A549 (cell line): ENCODE measurements at regions of chr5 and their contacts with region 1.

Region 1: GRCh38 chr5:73448463-73449136 is at the start of gene FOXD1:
- DNase-seq: peak; percentile 77 to 95
- ATAC-seq: peak; percentile 78 to 94
- H3K4me3 ChIP-seq: peak within 1 kb of the TSS; percentile 67
- H3K27ac ChIP-seq: peak within 1 kb of the TSS; percentile 89 to 94
- H3K4me1 ChIP-seq: peaks cover 19% of the 10 kb centered on the region
- CTCF ChIP-seq: no peak
- EP300 ChIP-seq: no peak
- POLR2A ChIP-seq: peak; percentile 82
- RAD21 ChIP-seq: no peak
- polyA plus RNA-seq, gene FOXD1: 1.8 and 2.2 TPM in 2 replicates

Region 2: GRCh38 chr5:73081093-73081492 is 367.5 kb before region 1 on chr5:
- CTCF ChIA-PET with region 1: interaction called, 20 read pairs
- POLR2A ChIA-PET with region 1: interaction called, 5 read pairs
- DNase-seq: no peak
- ATAC-seq: no peak
- H3K4me3 ChIP-seq: no peak overlapping the region
- H3K27ac ChIP-seq: no peak overlapping the region
- H3K4me1 ChIP-seq: no peaks in the 10 kb centered on the region
- CTCF ChIP-seq: no peak
- EP300 ChIP-seq: no peak
- POLR2A ChIP-seq: no peak
- RAD21 ChIP-seq: no peak

Region 3: DNA sequence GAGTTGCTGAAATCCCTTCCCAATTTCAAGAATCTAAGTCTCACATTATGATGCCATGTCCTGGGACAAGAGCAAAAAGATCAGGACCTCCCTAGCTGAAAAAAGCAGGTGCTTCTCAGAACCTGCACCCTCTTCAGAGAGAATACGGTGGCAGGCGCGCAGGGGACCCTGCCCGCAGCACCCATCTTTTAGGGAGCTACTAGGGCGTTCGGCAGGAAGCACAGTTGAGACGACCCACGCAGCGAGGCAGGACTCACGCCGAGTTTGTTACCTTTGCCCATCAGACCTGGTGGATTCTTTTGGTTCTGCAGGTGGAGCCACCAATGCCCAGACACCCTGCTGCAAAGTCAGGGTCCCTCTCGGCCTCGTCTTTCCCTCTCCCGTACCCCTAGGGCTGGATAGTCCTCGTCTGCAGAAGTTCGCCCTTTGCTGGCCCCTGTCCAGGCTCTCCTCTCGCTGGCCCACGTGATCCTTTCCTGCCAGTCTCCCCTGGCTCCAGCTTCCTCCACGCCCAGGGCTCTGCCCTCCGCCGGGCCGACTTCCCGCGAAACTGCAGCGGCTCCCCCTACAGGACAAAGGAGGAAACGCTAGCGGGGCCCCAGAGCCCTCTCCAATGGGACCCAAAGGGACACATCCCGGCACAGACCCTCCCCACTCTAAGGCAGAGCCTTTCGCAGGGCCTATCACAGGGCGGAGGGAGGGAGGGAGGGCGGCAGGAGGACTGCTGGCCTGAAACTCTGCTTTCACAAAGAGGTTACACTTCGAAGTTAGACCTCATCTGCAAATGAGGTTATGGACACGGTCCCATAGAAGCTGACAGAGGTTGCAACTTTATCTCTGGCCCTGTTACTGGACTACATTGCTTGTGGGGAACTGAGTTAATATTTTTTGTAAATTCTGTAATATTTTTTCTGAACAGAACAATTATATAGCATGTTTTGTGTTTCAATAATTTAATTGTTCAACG is 246.8 kb before region 1 on chr5:
- CTCF ChIA-PET with region 1: interaction called, 19 read pairs
- POLR2A ChIA-PET with region 1: interaction called, 3 read pairs
- DNase-seq: peak; percentile 88 to 92
- ATAC-seq: peak; percentile 94 to 99
- H3K4me3 ChIP-seq: peak overlapping the region; percentile 42
- H3K27ac ChIP-seq: peak overlapping the region; percentile 58 to 80
- H3K4me1 ChIP-seq: 0 out of 3 replicates have a peak, but pooled peaks cover 3% of the 10 kb centered on the region
- CTCF ChIP-seq: peak; percentile 83
- EP300 ChIP-seq: no peak
- POLR2A ChIP-seq: peak; percentile 45
- RAD21 ChIP-seq: peak; percentile 84

Region 4: DNA sequence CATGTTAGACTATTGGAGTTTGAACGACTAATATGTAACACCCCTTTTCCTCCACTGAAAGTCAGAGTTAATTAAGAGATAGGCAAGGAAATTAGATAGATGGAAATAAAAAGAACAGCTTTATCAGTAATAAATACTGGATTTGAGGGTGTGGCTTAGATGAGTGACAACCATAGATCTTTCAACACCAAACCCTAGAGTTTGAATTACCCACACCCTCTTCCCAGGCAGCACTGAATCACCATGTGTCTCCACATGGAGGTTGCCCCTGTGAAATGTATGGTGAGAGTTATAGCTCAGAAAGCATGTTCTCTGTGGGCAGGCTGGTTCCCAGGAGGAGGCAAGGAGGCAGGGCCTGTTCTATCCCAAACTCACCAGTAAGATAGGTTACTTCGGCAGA is 205.9 kb before region 1 on chr5:
- CTCF ChIA-PET with region 1: interaction called, 11 read pairs
- POLR2A ChIA-PET with region 1: no interaction called
- DNase-seq: no peak
- ATAC-seq: no peak
- H3K4me3 ChIP-seq: no peak overlapping the region
- H3K27ac ChIP-seq: no peak overlapping the region
- H3K4me1 ChIP-seq: no peaks in the 10 kb centered on the region
- CTCF ChIP-seq: no peak
- EP300 ChIP-seq: no peak
- POLR2A ChIP-seq: no peak
- RAD21 ChIP-seq: no peak

Region 5: GRCh38 chr5:73330613-73331012 is 118.0 kb before region 1 on chr5:
- CTCF ChIA-PET with region 1: no interaction called
- POLR2A ChIA-PET with region 1: no interaction called
- DNase-seq: no peak
- ATAC-seq: no peak
- H3K4me3 ChIP-seq: no peak overlapping the region
- H3K27ac ChIP-seq: no peak overlapping the region
- H3K4me1 ChIP-seq: 0 out of 3 replicates have a peak, but pooled peaks cover 2% of the 10 kb centered on the region
- CTCF ChIP-seq: no peak
- EP300 ChIP-seq: no peak
- POLR2A ChIP-seq: no peak
- RAD21 ChIP-seq: no peak

Region 6: DNA sequence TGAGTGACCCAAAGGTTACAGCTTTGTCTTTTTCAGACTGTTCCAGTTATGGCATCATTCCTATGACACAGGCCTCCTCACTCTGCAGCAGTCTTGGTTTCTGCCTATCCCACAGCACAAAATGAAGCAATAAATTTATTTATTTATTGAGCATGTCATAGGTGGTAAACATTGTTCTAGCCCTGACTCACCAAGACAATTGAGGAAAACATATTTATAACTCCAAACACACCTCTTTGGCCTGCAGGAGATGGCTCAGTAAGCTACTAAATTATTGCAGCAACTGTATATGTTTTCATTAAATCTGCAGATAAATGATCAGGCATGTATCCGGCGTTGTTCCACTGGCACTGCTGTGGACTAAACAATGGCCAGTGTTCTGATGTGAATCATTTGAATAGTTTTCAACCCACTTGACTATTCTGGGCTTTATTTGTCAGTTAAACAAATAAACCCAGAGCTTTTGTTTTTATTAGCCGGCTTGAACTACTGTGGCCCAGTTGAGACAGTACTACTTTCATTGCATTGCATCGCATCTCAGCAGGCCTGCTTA is 83.2 kb before region 1 on chr5:
- CTCF ChIA-PET with region 1: interaction called, 13 read pairs
- POLR2A ChIA-PET with region 1: interaction called, 4 read pairs
- DNase-seq: peak; percentile 25 to 49
- ATAC-seq: peak; percentile 81 to 85
- H3K4me3 ChIP-seq: no peak overlapping the region
- H3K27ac ChIP-seq: peak overlapping the region; percentile 46 to 71; a peak in 5 of 6 replicates
- H3K4me1 ChIP-seq: peaks cover 35% of the 10 kb centered on the region
- CTCF ChIP-seq: no peak
- EP300 ChIP-seq: peak in 1 of 2 experiments; percentile 35; a peak in 1 of 5 replicates
- POLR2A ChIP-seq: no peak
- RAD21 ChIP-seq: no peak

Region 7: GRCh38 chr5:73464016-73464745 is 15.6 kb after region 1 on chr5:
- CTCF ChIA-PET with region 1: interaction called, 37 read pairs
- POLR2A ChIA-PET with region 1: interaction called, 8 read pairs
- DNase-seq: no peak
- ATAC-seq: no peak
- H3K4me3 ChIP-seq: no peak overlapping the region
- H3K27ac ChIP-seq: no peak overlapping the region
- H3K4me1 ChIP-seq: no peaks in the 10 kb centered on the region
- CTCF ChIP-seq: no peak
- EP300 ChIP-seq: no peak
- POLR2A ChIP-seq: no peak
- RAD21 ChIP-seq: no peak

Region 8: DNA sequence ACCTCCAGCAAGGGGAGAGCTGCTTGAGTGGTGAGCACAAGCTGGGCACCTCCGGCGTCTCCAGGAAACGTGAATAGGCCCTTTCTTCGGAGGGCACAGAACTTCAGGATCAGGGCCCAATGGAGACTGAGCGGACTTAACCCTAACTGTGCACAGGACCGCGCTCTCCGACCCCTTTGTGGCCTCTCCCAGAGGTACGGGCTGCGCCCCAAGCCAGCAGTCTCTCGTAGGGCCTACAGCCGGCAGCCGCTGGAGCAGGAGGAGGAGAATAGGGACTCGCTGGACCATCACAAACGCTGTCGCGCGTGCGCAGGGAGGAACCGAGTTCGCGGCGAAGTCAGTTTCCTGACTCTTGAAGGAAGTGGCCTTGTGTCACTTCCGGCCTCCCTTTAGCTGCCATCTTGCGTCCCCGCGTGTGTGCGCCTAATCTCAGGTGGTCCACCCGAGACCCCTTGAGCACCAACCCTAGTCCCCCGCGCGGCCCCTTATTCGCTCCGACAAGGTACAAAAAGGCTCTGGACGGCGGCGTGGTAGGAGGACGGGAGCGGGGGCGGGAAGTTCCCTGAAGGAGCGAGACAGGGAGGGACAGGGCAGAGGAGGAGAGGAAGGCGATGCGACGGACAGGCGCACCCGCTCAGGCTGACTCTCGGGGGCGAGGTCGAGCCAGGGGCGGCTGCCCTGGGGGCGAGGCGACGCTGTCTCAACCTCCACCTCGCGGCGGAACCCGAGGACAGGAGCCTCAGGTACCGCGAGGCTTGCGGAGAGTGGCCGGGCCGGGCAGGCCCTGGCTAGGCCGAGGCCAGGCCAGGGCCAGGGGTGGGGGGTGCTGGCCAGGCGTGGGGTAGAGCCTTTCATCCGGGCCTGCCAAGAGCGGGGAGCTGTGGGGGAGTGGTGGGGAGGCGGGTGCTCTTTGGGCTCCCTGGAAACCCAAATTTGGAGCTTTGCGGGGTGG is 49.7 kb after region 1 on chr5 and contains the start of gene BTF3:
- CTCF ChIA-PET with region 1: interaction called, 18 read pairs
- POLR2A ChIA-PET with region 1: interaction called, 26 read pairs
- DNase-seq: peak; percentile 96 to 99
- ATAC-seq: peak; percentile 97
- H3K4me3 ChIP-seq: peak within 1 kb of the TSS; percentile 64
- H3K27ac ChIP-seq: peak within 1 kb of the TSS; percentile 90 to 98
- H3K4me1 ChIP-seq: peaks cover 34% of the 10 kb centered on the region
- CTCF ChIP-seq: no peak
- EP300 ChIP-seq: no peak
- POLR2A ChIP-seq: peak; percentile 89
- RAD21 ChIP-seq: no peak
- polyA plus RNA-seq, gene BTF3: 905 and 1,048 TPM in 2 replicates

Region 9: GRCh38 chr5:73591102-73591695 is 142.6 kb after region 1 on chr5:
- CTCF ChIA-PET with region 1: no interaction called
- POLR2A ChIA-PET with region 1: no interaction called
- DNase-seq: peak; percentile 64 to 88
- ATAC-seq: peak; percentile 83 to 90
- H3K4me3 ChIP-seq: no peak overlapping the region
- H3K27ac ChIP-seq: peak overlapping the region; percentile 58 to 70
- H3K4me1 ChIP-seq: peaks cover 27% of the 10 kb centered on the region
- CTCF ChIP-seq: peak; percentile 97
- EP300 ChIP-seq: no peak
- POLR2A ChIP-seq: no peak
- RAD21 ChIP-seq: peak; percentile 97 to 98

Region 10: DNA sequence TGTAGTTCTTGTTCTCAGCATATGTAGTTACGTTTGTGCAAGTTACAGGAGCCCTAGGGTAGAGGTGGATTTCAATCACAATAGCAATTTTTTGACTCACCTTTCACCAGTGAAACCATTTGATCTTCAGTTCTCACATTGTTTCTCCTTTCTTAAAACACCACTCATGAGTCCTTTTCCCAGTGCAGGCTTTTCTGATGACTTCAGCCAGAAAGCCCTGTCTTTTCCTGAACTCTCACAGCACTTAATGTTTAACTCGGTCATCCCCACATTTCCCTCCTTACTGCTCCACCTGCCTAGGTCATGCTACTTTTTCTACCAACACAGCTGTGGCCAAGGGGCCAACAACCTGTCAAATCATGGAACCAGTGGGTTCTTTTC is 215.2 kb after region 1 on chr5:
- CTCF ChIA-PET with region 1: no interaction called
- POLR2A ChIA-PET with region 1: no interaction called
- DNase-seq: peak in 1 of 2 experiments; percentile 17
- ATAC-seq: peak; percentile 33 to 60; a peak in 4 of 6 replicates
- H3K4me3 ChIP-seq: no peak overlapping the region; the same call in 2 of the 3 replicates
- H3K27ac ChIP-seq: peak overlapping the region; percentile 46 to 73
- H3K4me1 ChIP-seq: peaks cover 65% of the 10 kb centered on the region
- CTCF ChIP-seq: no peak
- EP300 ChIP-seq: no peak
- POLR2A ChIP-seq: no peak
- RAD21 ChIP-seq: no peak

Region 11: DNA sequence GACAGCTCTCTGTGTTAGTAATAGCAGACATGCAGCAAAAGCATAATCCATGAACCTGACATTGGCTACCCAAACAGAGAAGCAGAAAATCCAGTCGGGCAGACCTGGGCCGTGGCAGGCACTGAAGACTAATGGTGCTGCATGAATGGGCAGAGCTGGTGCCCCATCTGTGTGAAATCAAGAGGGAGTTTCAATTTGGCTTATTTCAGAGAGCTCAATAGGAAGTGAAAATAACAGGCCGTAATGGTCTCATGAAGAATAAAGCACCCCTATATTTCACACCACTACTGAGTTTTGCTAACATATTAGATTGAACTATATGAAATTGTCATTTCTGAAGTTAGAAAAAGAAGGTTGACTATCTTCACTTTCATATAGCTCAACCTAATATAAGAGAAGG is 1042.2 kb after region 1 on chr5:
- CTCF ChIA-PET with region 1: no interaction called
- POLR2A ChIA-PET with region 1: no interaction called
- DNase-seq: no peak
- ATAC-seq: no peak
- H3K4me3 ChIP-seq: no peak overlapping the region
- H3K27ac ChIP-seq: no peak overlapping the region
- H3K4me1 ChIP-seq: no peaks in the 10 kb centered on the region
- CTCF ChIP-seq: no peak
- EP300 ChIP-seq: no peak
- POLR2A ChIP-seq: no peak
- RAD21 ChIP-seq: no peak